ENCODE measurements at regions of chr14 and their contacts with region 1.

Region 1: GRCh38 chr14:55051426-55052268 is at the start of gene MAPK1IP1L:
- DNase-seq: peak; percentile 90
- H3K4me3 Mint-ChIP-seq: peak within 1 kb of the TSS; percentile 86
- H3K27ac Mint-ChIP-seq: peak within 1 kb of the TSS; percentile 95
- H3K4me1 Mint-ChIP-seq: peaks cover 42% of the 10 kb centered on the region
- H3K27me3 Mint-ChIP-seq: no peaks in the 10 kb centered on the region
- total RNA-seq, gene MAPK1IP1L: 78.2 to 83.4 TPM

Region 2: GRCh38 chr14:54652188-54652587 is 399.5 kb before region 1 on chr14:
- CTCF ChIA-PET with region 1: no interaction called
- intact Hi-C with region 1: no loop called
- DNase-seq: no peak
- H3K4me3 Mint-ChIP-seq: no peak overlapping the region
- H3K27ac Mint-ChIP-seq: no peak overlapping the region
- H3K4me1 Mint-ChIP-seq: peaks cover 8% of the 10 kb centered on the region
- H3K27me3 Mint-ChIP-seq: peaks cover 10% of the 10 kb centered on the region

Region 3: DNA sequence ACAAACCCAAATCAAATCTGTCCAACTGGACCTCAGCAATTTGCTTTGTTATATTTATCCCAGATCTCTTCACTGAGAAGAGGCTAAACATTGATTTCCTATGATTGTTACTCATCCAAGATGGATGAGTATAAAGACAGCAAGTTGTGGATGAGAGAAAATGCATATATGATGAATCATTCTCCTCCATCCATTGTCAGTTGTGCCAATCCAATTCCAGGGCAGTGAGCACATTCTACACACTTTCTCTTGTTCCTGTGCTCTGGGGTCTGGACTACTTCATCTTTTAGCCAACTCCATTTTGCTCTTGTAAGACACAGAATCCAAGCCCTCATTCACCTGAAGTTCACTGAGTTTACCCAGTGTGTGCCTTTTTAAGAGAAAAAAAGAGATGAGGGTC is 254.7 kb before region 1 on chr14:
- CTCF ChIA-PET with region 1: no interaction called
- intact Hi-C with region 1: no loop called
- DNase-seq: no peak
- H3K4me3 Mint-ChIP-seq: no peak overlapping the region
- H3K27ac Mint-ChIP-seq: no peak overlapping the region
- H3K4me1 Mint-ChIP-seq: no peaks in the 10 kb centered on the region
- H3K27me3 Mint-ChIP-seq: peaks cover 10% of the 10 kb centered on the region

Region 4: DNA sequence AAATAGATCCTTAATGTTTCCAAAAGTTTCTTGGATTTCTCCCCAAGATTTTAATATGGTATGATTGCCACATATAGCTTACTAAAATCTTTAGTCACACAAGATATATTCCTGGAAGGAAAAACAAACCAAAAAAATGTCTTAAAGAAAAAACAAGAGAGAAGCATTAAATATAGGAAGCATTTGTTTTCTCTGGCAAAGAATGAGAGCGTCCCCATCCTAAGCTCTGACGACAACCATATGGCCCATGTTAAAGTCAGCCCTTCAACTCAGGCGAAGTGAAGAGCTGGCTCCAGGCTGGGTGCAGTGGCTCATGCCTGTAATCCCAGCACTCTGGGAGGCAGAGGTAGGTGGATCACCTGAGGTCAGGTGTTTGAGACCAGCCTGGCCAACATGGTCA is 184.6 kb before region 1 on chr14:
- CTCF ChIA-PET with region 1: no interaction called
- intact Hi-C with region 1: no loop called
- DNase-seq: no peak
- H3K4me3 Mint-ChIP-seq: no peak overlapping the region
- H3K27ac Mint-ChIP-seq: no peak overlapping the region
- H3K4me1 Mint-ChIP-seq: peaks cover 19% of the 10 kb centered on the region
- H3K27me3 Mint-ChIP-seq: no peaks in the 10 kb centered on the region

Region 5: DNA sequence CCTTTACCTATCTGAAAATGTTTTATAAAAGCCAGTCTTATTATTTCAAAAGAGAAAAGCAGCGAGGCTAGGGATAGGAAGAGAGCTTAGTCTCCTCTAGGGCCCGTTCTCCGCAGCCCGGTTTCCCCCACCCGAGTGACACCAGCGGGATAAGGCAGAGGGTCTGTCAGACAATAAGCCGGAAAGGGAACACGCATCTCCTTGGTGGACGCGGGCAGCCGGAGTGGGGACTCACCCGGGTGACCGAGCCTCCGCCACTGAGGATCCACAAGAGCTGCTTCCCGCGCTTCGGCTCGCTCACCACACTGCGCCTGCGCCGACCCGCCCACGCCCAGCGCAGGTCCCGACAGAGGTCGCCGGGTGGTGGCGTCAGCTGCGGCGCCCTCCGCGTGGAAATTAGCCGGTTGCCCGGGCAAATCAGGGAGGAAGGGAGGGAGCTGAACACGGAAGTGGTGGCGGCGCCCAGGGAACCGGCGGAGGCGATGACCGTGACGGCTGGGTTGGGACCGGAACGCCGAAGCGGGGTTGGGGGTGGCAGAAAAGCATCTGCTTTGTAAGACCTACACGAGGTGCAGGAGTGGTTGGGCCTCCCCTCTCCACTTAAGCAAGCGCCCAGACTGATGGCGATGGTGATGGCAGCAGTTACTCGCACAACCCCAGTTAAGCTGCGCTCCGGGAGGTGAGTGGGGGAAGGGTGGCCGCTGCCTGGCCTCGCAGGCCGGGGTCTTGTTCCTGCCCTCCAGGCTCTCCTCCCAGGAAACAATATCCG is 24.7 kb before region 1 on chr14 and contains the starts of genes SOCS4 and WDHD1:
- CTCF ChIA-PET with region 1: interaction called, 21 read pairs
- intact Hi-C with region 1: loop called (anchors 1 kb)
- DNase-seq: peak; percentile 97
- H3K4me3 Mint-ChIP-seq: peak within 1 kb of the TSS; percentile 96
- H3K27ac Mint-ChIP-seq: peak within 1 kb of the TSS; percentile 92
- H3K4me1 Mint-ChIP-seq: peaks cover 46% of the 10 kb centered on the region
- H3K27me3 Mint-ChIP-seq: no peaks in the 10 kb centered on the region
- total RNA-seq, gene SOCS4: 17.7 to 17.9 TPM
- total RNA-seq, gene WDHD1: 61.1 to 62.9 TPM

Region 6: DNA sequence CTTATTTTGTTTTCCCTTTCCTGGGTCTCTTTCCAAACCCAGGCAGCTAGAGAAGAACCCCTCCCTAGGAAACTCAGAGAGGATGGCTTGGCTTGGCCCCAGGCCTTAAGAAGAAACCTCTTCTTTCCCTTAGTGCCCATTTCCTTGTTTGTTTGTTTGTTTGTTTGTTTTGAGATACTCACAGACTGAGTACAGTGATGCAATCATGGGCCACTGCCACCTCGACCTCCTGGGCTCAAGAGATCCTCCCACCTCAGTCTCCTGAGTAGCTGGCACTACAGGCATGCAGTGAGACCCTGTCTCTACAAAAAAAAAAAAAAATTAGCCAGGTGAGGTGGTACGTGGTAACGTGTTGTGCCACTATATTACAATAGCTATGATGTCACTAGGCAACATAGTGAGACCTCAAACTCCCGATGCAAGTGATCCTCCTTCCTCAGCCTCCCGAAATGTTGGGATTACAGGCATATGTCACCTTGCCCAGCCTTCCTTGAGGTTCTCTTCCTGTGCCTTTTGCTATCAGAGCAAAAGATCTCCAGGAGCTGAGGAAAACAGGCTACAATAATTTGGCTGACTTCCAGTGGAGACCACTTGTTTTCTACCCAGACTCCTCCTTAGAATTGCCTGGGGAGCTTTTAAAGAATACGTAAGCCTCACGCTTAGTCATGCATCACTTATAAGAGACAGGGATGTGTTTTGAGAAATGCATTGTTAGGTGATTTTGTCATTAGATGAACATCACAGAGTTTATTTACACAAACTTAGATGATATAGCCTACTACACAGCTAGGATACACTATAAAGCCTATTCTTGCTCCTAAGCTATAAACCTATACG is 42.9 kb after region 1 on chr14:
- CTCF ChIA-PET with region 1: interaction called, 6 read pairs
- intact Hi-C with region 1: loop called (anchors 1 kb)
- DNase-seq: no peak
- H3K4me3 Mint-ChIP-seq: no peak overlapping the region
- H3K27ac Mint-ChIP-seq: no peak overlapping the region
- H3K4me1 Mint-ChIP-seq: peaks cover 17% of the 10 kb centered on the region
- H3K27me3 Mint-ChIP-seq: no peaks in the 10 kb centered on the region

Region 7: DNA sequence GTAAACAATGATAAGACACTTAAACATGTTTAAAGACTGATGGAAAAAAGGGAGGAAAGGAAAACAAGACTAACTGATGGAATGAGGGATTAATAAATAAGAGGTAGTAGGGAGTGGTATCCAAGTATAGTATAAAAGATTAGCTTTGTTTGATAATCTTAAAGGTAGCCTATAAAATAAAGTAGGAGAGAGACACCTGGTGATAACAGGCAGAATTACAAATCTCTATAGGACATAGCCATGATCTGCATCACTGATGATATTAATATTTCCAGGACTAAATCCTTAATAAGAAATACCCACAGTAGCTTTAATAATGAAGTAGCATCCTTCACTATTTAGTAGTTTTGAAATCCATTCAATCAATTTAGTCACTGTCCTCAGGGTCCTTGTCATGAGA is 109.3 kb after region 1 on chr14:
- CTCF ChIA-PET with region 1: interaction called, 3 read pairs
- intact Hi-C with region 1: loop called (anchors 1 kb)
- DNase-seq: no peak
- H3K4me3 Mint-ChIP-seq: no peak overlapping the region
- H3K27ac Mint-ChIP-seq: no peak overlapping the region
- H3K4me1 Mint-ChIP-seq: peaks cover 10% of the 10 kb centered on the region
- H3K27me3 Mint-ChIP-seq: no peaks in the 10 kb centered on the region

Region 8: DNA sequence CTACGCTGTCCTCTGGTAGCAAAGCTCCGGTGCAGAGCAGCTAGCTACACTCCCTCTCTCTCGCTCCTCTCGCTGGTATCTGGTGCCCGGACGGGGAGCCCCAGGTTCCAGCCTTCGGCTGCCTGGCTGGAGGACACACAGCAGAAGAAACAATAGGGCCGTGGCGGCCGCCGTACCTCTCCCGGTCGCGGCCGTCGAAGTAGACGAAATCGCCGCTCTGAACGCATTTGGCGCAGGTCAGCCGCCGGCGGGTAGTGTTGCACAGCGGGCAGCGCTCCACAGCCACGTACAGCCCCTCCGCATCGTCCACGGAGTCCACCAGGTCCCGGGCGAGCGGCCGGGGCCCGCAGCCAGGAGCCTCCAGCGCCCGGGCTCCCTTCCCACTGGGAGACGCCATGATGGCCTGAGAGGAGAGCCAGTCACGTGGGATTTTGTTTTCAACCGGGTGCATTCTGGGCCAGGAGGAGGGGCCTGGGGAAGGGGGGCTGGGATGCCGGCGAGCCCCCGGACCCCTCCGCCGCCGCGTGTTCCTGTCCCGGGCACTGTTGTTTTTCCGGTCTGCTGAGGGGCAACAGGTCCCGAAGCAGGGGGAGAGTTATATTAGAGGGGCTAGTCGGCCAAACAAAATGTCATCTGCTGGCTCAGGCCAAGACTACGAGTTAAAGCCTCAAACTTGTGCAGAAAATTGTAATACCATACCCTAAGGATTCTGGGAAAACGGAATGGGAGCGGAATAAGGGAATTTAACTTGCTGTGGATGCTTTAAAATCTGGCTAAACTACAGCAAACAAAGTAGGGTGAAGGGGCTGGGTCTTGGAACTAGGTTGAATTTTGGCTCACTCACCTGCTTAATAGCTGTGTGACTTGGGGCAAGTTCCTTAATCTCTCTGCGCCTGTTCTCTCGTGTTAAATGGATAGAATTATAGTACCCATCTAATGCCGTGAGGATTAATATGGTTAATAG is 360.1 kb after region 1 on chr14 and contains the start of gene ATG14:
- CTCF ChIA-PET with region 1: no interaction called
- intact Hi-C with region 1: loop called (anchors 5 kb)
- DNase-seq: peak; percentile 87
- H3K4me3 Mint-ChIP-seq: peak within 1 kb of the TSS; percentile 81
- H3K27ac Mint-ChIP-seq: peak within 1 kb of the TSS; percentile 83
- H3K4me1 Mint-ChIP-seq: peaks cover 33% of the 10 kb centered on the region
- H3K27me3 Mint-ChIP-seq: no peaks in the 10 kb centered on the region
- total RNA-seq, gene ATG14: 4.6 to 4.9 TPM